ENCODE measurements at regions of chr9 and their contacts with region 1.

Region 1: GRCh38 chr9:109411798-109412352 is 86.2 kb downstream of the PTPN3 start:
- DNase-seq: peak; percentile 49
- ATAC-seq: peak; percentile 63
- H3K4me3 Mint-ChIP-seq: no peak overlapping the region
- H3K27ac Mint-ChIP-seq: no peak overlapping the region
- H3K4me1 Mint-ChIP-seq: peaks cover 24% of the 10 kb centered on the region
- H3K27me3 Mint-ChIP-seq: peaks cover 11% of the 10 kb centered on the region

Region 2: DNA sequence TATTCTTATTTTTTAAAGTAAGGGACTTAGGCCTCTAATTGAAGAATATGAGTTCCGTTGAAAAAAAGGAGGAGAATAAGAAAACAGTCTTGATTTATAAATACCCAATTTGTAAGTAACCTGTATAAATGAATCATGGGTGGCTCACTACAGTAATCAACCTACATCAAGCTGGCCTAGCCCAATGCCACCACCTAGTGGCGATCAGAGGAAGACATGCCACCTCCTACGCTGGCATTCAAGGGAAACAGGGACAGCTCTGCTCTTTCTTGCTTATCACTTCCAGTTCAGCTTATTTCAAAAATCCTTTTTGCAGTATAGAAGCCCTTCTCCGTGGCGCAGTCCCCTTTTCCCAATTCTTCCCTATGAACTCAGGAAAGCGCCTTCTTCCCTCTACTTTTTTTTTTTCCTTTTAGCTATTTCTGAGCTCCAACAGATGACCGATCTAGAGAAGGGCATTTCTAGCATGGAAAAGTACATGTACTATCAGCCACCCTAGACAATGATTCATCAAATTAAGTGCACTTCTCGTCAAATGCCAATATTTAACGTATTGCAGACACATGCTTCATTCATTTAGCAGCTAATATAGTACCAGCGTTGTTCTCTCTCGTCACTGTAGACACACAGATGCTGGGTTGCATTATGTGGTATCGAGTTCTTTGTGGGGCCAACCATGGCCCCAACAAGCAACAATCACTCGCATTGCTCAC is 57.9 kb after region 1 on chr9:
- CTCF ChIA-PET with region 1: interaction called, 48 read pairs
- POLR2A ChIA-PET with region 1: no interaction called
- DNase-seq: peak; percentile 79
- ATAC-seq: peak; percentile 93
- H3K4me3 Mint-ChIP-seq: no peak overlapping the region
- H3K27ac Mint-ChIP-seq: no peak overlapping the region
- H3K4me1 Mint-ChIP-seq: peaks cover 22% of the 10 kb centered on the region
- H3K27me3 Mint-ChIP-seq: peaks cover 20% of the 10 kb centered on the region

Region 3: GRCh38 chr9:109574068-109574882 is 162.4 kb after region 1 on chr9:
- CTCF ChIA-PET with region 1: no interaction called
- POLR2A ChIA-PET with region 1: no interaction called
- DNase-seq: peak; percentile 44
- ATAC-seq: no peak
- H3K4me3 Mint-ChIP-seq: no peak overlapping the region
- H3K27ac Mint-ChIP-seq: no peak overlapping the region
- H3K4me1 Mint-ChIP-seq: no peaks in the 10 kb centered on the region
- H3K27me3 Mint-ChIP-seq: peaks cover 10% of the 10 kb centered on the region

Measured in activated CD8-positive, alpha-beta T cell treated with anti-CD3 and anti-CD28 coated beads, Interleukin-2, amount 10 ng/mL, durations not matched to agents 7 days and 5 days (primary cell).